CD8-positive, alpha-beta T cell (primary cell): ENCODE measurements at regions of chr11 and their contacts with region 1.

Region 1: GRCh38 chr11:66069715-66070603 is at the start of gene PACS1:
- DNase-seq: peak; percentile 56 to 94 (median 82)
- ATAC-seq: peak; percentile 68
- H3K4me3 ChIP-seq: peak within 1 kb of the TSS; percentile 62 to 74
- H3K4me3 Mint-ChIP-seq: peak within 1 kb of the TSS; percentile 92
- H3K27ac ChIP-seq: peak within 1 kb of the TSS; percentile 49 to 81
- H3K27ac Mint-ChIP-seq: peak within 1 kb of the TSS; percentile 95
- H3K4me1 ChIP-seq: peaks cover 41% of the 10 kb centered on the region
- H3K4me1 Mint-ChIP-seq: peaks cover 67% of the 10 kb centered on the region
- H3K27me3 ChIP-seq: no peaks in the 10 kb centered on the region
- H3K27me3 Mint-ChIP-seq: no peaks in the 10 kb centered on the region
- CTCF ChIP-seq: no peak
- total RNA-seq, gene PACS1: 161 to 176 TPM

Region 2: DNA sequence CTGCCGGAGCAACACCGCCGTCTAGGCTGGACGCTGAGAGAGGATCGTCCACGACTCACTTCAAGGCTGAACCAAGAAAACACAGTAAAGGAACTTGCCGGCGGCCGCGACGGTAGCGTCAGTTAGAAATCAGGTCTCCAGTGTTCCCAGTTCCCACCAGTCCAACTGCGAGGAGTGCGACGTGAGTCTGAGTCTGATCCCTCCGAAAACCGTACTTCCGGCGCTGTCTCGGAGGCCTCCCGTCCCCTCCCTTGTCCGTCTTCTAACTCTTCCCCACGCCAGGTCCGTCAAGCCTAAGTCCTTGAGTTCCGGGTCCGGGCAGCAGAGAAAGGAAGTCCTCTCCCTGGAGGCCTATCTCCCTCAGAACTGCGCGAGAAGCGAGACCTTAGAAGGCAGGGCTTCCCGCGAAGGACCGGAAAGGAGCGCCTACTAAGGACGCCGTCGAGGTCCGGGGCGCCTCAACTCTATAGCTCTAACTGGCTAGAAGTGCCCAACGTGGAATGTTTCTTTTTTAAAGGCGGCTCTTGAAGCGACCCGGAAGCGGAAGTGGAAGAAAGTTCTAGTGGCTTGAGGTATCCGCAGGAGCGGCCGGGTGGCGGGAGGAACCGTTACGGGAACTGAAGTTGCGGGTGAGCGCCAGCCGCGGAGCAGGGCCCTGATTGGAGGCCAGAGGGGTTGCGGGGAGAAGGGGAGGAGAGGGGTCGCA is 67.9 kb before region 1 on chr11 and contains the starts of genes BANF1 and EIF1AD:
- CTCF ChIA-PET with region 1: interaction called, 3 read pairs
- POLR2A ChIA-PET with region 1: no interaction called
- intact Hi-C with region 1: loop called in 1 of 2 experiments (anchors 5 kb)
- DNase-seq: peak; percentile 85 to 98 (median 92)
- ATAC-seq: peak; percentile 83
- H3K4me3 ChIP-seq: peak within 1 kb of the TSS; percentile 80 to 98
- H3K4me3 Mint-ChIP-seq: peak within 1 kb of the TSS; percentile 99
- H3K27ac ChIP-seq: peak within 1 kb of the TSS; percentile 93 to 95
- H3K27ac Mint-ChIP-seq: peak within 1 kb of the TSS; percentile 98
- H3K4me1 ChIP-seq: peaks cover 21% of the 10 kb centered on the region
- H3K4me1 Mint-ChIP-seq: peaks cover 43% of the 10 kb centered on the region
- H3K27me3 ChIP-seq: no peaks in the 10 kb centered on the region
- H3K27me3 Mint-ChIP-seq: no peaks in the 10 kb centered on the region
- CTCF ChIP-seq: no peak
- total RNA-seq, gene BANF1: 31.6 to 34.0 TPM
- total RNA-seq, gene EIF1AD: 119 to 126 TPM

Region 3: DNA sequence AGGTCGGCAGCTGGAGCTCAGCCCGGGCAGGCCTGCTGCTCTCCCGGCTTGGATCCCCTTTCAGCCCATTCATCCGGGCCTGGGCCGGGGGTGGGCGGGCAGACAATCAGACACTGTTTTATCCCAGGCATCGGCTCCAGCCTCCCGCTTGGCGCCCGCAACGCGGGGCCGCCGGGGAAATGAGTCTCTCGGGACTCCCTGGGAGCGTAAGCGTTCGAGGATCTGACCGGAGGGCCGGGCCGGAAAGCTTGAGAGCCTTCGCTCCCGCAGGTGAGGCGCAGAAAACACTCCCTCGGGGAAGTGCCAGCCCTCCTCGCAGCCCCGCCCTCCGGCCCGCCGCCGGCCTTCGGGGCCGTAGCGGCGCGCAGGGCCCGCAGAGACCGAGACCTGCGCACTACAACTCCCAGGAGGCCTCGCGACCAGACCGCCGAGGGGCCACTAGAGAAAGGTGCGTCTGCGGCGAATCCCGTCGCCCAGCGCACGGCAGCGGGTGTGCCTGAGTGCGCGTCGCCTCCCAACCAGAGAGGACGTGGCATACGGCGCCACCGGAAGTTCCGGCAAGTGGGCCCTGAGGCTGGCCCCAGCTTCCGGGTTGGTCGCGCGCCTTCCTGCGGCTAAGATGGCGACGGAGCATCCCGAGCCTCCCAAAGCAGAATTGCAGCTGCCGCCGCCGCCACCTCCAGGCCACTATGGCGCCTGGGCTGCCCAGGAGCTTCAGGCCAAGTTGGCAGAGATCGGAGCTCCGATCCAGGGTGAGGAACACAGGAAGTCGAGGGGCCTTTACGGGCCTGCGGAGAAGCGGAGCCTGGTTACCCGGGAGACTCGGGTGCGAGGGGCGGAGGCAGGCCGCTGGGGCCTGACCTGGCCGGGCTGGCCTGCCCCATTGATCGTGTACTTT is 17.9 kb before region 1 on chr11 and contains the start of gene SF3B2:
- CTCF ChIA-PET with region 1: interaction called, 29 read pairs
- POLR2A ChIA-PET with region 1: interaction called, 10 read pairs
- intact Hi-C with region 1: loop called in 1 of 2 experiments (anchors 1 kb)
- DNase-seq: peak; percentile 88 to 99 (median 94)
- ATAC-seq: peak; percentile 97
- H3K4me3 ChIP-seq: peak within 1 kb of the TSS; percentile 97 to 99
- H3K4me3 Mint-ChIP-seq: peak within 1 kb of the TSS; percentile 98
- H3K27ac ChIP-seq: peak within 1 kb of the TSS; percentile 87 to 91
- H3K27ac Mint-ChIP-seq: peak within 1 kb of the TSS; percentile 97
- H3K4me1 ChIP-seq: peaks cover 29% of the 10 kb centered on the region
- H3K4me1 Mint-ChIP-seq: peaks cover 32% of the 10 kb centered on the region
- H3K27me3 ChIP-seq: no peaks in the 10 kb centered on the region
- H3K27me3 Mint-ChIP-seq: no peaks in the 10 kb centered on the region
- CTCF ChIP-seq: no peak
- total RNA-seq, gene SF3B2: 196 to 217 TPM

Region 4: GRCh38 chr11:66100272-66101065 is 30.5 kb after region 1 on chr11:
- CTCF ChIA-PET with region 1: interaction called, 11 read pairs
- POLR2A ChIA-PET with region 1: interaction called, 10 read pairs
- intact Hi-C with region 1: loop called (anchors 2 kb)
- DNase-seq: peak; percentile 31 to 88 (median 73)
- ATAC-seq: peak; percentile 90
- H3K4me3 ChIP-seq: peak overlapping the region; percentile 40 to 48
- H3K4me3 Mint-ChIP-seq: peak overlapping the region; percentile 82
- H3K27ac ChIP-seq: peak overlapping the region; percentile 45 to 82
- H3K27ac Mint-ChIP-seq: peak overlapping the region; percentile 95
- H3K4me1 ChIP-seq: peaks cover 70% of the 10 kb centered on the region
- H3K4me1 Mint-ChIP-seq: peaks cover 69% of the 10 kb centered on the region
- H3K27me3 ChIP-seq: no peaks in the 10 kb centered on the region
- H3K27me3 Mint-ChIP-seq: no peaks in the 10 kb centered on the region
- CTCF ChIP-seq: no peak

Region 5: DNA sequence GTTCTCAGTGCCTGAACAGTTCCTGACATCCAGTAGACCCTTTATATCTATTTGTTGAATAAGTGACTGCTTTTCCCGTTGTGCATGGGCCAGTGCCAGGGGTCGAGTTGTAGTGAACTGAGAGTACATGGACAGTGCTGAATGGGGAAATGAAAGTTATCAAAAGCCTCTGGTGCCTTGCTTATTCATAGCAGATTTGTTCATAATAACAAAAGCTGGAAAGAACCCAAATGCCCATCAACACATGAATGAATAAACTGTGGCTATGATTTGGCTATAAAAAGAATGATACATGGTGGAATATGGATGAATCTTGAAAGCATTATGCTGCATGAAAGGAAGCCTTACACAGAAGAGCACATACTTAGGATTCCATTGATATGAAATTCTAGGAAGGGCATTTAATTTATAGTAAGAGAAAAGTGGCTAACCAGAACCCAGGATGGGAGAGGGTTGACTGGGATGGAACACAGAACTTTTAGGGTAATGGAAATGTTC is 42.7 kb after region 1 on chr11:
- CTCF ChIA-PET with region 1: interaction called, 74 read pairs
- POLR2A ChIA-PET with region 1: interaction called, 25 read pairs
- intact Hi-C with region 1: loop called in 1 of 2 experiments (anchors 5 kb)
- DNase-seq: no peak
- ATAC-seq: no peak
- H3K4me3 ChIP-seq: no peak overlapping the region
- H3K4me3 Mint-ChIP-seq: peak overlapping the region; percentile 38
- H3K27ac ChIP-seq: peak overlapping the region in 1 of 2 experiments; percentile 47
- H3K27ac Mint-ChIP-seq: peak overlapping the region; percentile 89
- H3K4me1 ChIP-seq: peaks cover 88% of the 10 kb centered on the region
- H3K4me1 Mint-ChIP-seq: peaks cover 94% of the 10 kb centered on the region
- H3K27me3 ChIP-seq: no peaks in the 10 kb centered on the region
- H3K27me3 Mint-ChIP-seq: no peaks in the 10 kb centered on the region
- CTCF ChIP-seq: no peak

Region 6: DNA sequence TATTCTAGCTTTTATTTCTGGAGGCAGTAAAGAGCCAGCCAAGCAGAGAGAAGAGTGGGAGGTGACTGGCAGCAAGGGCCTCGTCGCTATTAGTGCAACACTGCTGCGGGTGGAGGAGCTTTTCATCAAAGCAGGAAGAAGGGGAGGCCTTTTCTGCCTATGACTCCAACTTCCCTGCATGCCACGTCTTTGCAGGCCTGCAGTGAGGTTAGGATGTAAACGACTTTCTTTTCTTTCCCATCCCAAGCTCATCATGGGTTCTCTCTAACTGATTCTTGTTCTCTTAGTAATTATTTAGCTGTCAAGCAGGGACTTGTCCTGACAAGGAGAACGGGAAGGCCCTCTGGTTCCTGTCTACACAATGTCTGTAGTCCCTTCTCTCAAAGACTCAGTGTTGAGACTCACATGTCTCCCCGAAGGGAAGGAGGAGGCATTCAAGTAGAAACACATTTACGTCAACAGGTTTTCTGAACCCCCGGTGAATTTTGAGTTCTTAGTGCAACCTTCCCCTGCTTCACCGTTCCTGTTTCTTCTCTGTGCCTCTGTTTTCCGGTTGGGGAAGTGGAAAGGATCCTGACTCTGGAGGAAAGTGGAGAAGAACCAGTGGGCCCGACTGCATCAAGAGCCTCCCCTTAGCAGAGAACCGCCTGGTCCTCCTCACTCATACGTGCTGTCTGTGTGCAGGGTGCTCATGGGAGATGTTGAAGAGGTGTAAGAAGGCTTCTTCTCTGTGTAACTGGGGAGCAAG is 57.0 kb after region 1 on chr11:
- CTCF ChIA-PET with region 1: interaction called, 107 read pairs
- POLR2A ChIA-PET with region 1: interaction called, 11 read pairs
- intact Hi-C with region 1: loop called (anchors 2 kb)
- DNase-seq: peak; percentile 18 to 79 (median 61)
- ATAC-seq: peak; percentile 94
- H3K4me3 ChIP-seq: peak overlapping the region; percentile 2 to 6
- H3K4me3 Mint-ChIP-seq: peak overlapping the region; percentile 78
- H3K27ac ChIP-seq: peak overlapping the region; percentile 37 to 73
- H3K27ac Mint-ChIP-seq: peak overlapping the region; percentile 99
- H3K4me1 ChIP-seq: peaks cover 70% of the 10 kb centered on the region
- H3K4me1 Mint-ChIP-seq: peaks cover 80% of the 10 kb centered on the region
- H3K27me3 ChIP-seq: no peaks in the 10 kb centered on the region
- H3K27me3 Mint-ChIP-seq: no peaks in the 10 kb centered on the region
- CTCF ChIP-seq: no peak

Region 7: DNA sequence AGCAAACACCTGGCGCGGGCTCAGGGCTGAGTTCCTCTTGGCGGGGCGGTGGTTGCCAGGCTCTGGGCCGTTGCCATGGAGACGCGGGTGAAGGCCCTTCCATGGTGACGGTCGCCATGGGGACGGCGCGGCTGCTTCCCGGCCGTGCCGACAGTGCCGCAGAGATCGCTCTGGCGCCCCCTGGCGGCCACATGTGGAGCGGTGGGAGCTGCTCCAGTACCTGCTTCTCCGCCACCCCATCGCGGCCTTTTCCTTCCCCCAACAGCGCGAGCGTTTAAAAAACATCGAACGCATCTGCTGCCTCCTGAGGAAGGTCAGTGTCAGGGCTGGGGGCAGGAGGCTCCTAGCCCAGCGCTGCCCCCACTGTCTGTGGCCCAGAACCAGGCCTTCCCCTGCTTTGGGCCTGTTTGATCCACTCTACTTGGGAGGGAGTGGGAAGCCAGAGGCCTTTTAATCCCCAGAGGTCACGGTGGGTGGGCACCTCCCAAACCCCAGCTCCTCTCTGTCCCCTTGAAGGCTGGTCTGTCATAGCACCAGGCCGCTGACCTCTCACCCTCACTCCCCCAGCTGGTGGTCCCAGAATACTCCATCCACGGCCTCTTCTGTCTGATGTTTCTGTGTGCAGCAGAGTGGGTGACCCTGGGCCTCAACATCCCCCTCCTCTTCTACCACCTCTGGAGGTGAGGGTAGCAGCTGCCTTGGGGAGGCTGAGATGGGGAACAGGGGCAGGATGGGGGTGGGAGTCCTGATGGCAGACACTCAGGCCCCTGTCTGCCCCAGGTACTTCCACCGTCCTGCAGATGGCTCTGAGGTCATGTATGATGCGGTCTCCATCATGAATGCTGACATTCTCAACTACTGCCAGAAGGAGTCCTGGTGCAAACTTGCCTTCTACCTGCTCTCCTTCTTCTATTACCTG is 212.8 kb after region 1 on chr11:
- CTCF ChIA-PET with region 1: no interaction called
- POLR2A ChIA-PET with region 1: no interaction called
- intact Hi-C with region 1: loop called in 1 of 2 experiments (anchors 10 kb)
- DNase-seq: peak; percentile 98 to 100 (median 99)
- ATAC-seq: peak; percentile 73
- H3K4me3 ChIP-seq: no peak overlapping the region
- H3K4me3 Mint-ChIP-seq: no peak overlapping the region
- H3K27ac ChIP-seq: peak overlapping the region in 1 of 2 experiments; percentile 59
- H3K27ac Mint-ChIP-seq: peak overlapping the region; percentile 84
- H3K4me1 ChIP-seq: peaks cover 27% of the 10 kb centered on the region
- H3K4me1 Mint-ChIP-seq: peaks cover 45% of the 10 kb centered on the region
- H3K27me3 ChIP-seq: peaks cover 0 to 5% of the 10 kb centered on the region in 2 experiments
- H3K27me3 Mint-ChIP-seq: no peaks in the 10 kb centered on the region
- CTCF ChIP-seq: peak; percentile 89